ENCODE measurements at regions of chr18 and their contacts with region 1.

Region 1: DNA sequence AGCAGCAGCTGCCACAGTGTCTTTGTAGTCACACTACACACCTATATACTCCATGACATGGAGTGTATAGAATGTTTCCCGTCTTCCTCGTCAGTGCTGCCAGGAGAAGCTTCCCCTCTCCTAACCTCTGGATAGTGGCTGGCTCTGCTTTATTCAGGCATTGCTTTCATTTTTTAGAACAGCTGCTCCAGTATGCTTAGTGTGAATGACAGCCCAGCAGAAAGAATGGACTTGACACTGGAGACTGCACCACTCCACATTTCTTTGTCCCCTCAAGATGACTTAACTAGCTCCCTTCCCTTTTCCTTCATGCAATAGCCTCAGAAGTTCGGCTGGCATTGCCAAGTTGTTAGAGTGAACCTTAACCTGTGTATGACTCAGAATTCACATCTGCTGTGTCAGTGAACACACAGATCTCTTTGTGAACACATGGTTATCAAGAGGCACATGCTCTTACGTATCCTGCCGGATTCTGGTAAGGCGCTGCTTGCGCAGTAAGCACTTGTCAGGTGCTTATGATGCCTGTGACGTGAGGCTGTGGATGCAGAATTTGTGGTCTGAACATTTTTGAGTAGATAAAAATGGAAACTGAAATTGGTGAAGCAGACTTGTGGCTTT is 73.9 kb downstream of the NEDD4L start:
- DNase-seq: no peak
- H3K4me3 ChIP-seq: no peak overlapping the region
- H3K27ac ChIP-seq: no peak overlapping the region
- H3K4me1 ChIP-seq: peaks cover 0 to 12% (median 5%) of the 10 kb centered on the region in 6 donors
- H3K27me3 ChIP-seq: no peaks in the 10 kb centered on the region
- CTCF ChIP-seq: no peak
- POLR2A ChIP-seq: no peak

Region 2: GRCh38 chr18:58043491-58044379 is 74.2 kb before region 1 on chr18 and contains the start of gene NEDD4L:
- intact Hi-C with region 1: loop called (anchors 2 kb)
- DNase-seq: peak; percentile 96
- H3K4me3 ChIP-seq: peak within 1 kb of the TSS; percentile 74 to 99 (median 95)
- H3K27ac ChIP-seq: peak within 1 kb of the TSS; percentile 66 to 92 (median 84)
- H3K4me1 ChIP-seq: peaks cover 5 to 56% (median 35%) of the 10 kb centered on the region in 6 donors
- H3K27me3 ChIP-seq: peaks cover 0 to 26% (median 0%) of the 10 kb centered on the region in 7 donors
- CTCF ChIP-seq: peak; percentile 51 to 88 (median 79)
- POLR2A ChIP-seq: no peak
- total RNA-seq, gene NEDD4L: 14.3 to 26.9 (median 24.9) TPM